Posterior vena cava (tissue), 2 donors: ENCODE measurements at regions of chr10 and their contacts with region 1.

Region 1: GRCh38 chr10:16440396-16441133 is 3.8 kb downstream of the PTER start:
- DNase-seq: no peak

Region 2: DNA sequence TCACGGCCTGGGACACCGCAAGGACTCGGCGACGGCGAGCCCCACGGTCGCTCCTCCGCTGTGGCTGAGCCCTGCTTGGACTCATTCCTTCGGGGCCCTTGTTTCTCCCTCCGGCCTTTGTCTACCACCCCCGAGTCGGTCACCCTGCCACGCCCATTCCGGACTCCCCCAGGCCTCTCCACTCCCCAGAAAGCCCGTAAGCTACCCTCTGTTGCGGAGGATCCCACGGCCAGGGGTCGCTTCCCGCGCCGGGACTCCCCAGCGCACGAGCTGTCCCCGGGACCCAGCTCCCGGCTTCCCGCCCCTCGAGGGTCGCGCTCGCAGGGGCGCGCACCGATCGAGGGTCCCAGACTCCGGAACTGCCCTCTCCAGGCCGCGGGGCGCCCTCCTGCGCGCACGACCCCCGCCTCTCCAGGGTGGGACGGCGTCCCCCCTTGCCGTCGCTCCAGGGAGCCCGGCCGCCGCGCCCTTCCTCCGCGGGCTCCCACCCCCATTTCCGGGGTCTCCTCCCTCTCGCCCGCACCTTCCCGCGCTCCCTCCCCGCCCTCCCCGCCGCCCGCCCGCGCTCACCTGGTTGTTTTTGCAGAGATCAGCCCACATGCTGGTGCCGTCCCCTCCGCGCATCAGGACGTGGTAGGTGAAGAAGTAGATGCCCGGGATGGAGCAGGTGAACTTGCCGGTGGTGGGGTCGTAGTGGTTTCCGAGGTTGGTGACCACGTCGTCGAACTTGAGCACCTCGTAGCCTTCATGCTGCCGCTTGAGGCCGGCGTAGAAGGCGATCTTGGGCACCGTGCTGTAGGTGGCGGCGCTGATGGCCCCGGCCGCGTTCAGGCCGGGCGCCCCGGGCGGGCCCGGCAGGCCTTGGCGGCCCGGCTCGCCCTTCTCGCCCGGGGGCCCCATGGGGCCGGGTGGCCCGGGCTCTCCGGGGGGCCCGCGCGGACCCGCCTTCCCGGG is 79.6 kb after region 1 on chr10:
- intact Hi-C with region 1: loop called in 1 of 2 experiments (anchors 2 kb)
- DNase-seq: no peak